ENCODE measurements at regions of chr7 and their contacts with region 1.

Region 1: DNA sequence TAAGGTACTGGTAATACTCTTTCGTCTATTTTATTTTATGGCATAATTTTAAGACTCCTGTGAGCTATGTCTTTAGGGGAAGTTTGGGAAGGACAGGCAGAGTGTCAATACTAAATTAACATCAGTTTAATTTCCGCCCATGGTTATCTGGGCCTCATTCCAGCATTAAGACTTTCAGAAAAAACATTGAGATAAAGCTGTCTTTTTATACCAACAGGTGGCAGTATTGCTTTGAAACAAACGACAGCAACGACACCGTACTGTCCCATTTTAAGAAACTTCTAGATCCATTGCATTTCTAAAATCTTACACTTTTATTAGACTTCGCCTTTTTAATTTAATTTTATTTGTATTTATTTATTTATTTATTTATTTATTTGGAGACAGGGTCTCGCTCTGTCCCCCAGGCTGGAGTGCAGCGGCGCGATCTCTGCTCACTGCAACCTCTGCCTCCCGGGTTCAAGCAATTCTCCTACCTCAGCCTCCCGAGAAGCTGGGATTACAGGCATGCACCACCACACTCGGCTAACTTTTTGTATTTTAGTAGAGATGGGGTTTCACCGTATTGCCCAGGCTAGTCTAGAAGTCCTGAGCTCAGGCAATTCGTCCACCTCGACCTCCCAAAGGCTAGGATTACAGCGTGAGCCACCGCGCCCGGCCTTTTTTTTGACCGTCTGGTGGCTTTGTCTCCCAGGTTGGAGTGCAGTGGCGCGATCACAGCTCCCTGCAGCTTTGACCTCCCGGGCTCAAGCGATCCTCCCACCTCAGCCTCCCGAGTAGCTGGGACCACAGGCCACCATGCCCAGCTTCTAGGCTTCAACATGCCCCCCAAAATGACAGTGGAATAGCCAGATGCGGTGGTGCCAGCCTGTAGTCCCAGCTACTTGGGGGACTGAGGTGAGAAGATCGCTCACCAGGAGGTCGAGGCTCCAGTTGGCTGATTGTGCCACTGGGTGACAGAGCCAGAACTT is 78.7 kb upstream of the C1GALT1 start:
- DNase-seq: peak in 2 of 3 donors; percentile 31 to 48
- ATAC-seq: peak; percentile 88
- H3K4me3 ChIP-seq: no peak overlapping the region
- H3K4me1 ChIP-seq: no peaks in the 10 kb centered on the region
- CTCF ChIP-seq: peak; percentile 45

Region 2: GRCh38 chr7:6691609-6692106 is 412.0 kb before region 1 on chr7:
- intact Hi-C with region 1: no loop called
- DNase-seq: no peak
- ATAC-seq: no peak
- H3K4me3 ChIP-seq: no peak overlapping the region
- H3K4me1 ChIP-seq: no peaks in the 10 kb centered on the region
- CTCF ChIP-seq: no peak

Region 3: GRCh38 chr7:7416031-7416858 is 312.6 kb after region 1 on chr7:
- intact Hi-C with region 1: loop called in 1 of 2 experiments (anchors 5 kb)
- DNase-seq: peak; percentile 56 to 71 (median 60)
- ATAC-seq: peak; percentile 86
- H3K4me3 ChIP-seq: no peak overlapping the region
- H3K4me1 ChIP-seq: peaks cover 27% of the 10 kb centered on the region
- CTCF ChIP-seq: no peak

Region 4: DNA sequence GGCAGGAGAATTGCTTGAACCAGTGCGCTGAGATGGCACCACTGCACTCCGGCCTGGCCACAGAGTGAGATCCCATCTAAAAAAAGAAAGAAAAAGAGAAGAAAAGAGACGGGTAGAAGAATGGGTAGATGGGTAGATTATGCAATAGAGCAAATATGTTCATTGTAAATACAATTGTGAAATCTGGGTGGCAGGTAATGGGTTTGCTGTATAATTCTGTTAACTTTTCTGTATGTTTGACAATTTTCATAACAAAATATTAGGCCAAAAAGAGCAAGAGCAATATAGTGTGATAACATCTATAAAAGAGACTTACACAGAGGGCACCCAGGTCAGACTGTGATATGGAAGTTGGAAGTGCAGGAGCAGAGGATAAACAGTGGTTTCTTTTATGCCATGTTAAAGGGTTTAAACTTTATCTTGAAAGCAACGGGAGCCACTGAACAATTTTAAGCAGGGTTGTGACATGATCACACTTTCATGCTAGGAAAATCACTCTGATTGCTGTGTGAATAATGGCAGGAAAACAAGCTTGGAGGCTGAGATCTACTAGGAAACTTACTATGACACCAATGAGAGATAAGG is 438.7 kb after region 1 on chr7:
- intact Hi-C with region 1: loop called in 1 of 2 experiments (anchors 10 kb)
- DNase-seq: no peak
- ATAC-seq: no peak
- H3K4me3 ChIP-seq: no peak overlapping the region
- H3K4me1 ChIP-seq: no peaks in the 10 kb centered on the region
- CTCF ChIP-seq: no peak

Region 5: DNA sequence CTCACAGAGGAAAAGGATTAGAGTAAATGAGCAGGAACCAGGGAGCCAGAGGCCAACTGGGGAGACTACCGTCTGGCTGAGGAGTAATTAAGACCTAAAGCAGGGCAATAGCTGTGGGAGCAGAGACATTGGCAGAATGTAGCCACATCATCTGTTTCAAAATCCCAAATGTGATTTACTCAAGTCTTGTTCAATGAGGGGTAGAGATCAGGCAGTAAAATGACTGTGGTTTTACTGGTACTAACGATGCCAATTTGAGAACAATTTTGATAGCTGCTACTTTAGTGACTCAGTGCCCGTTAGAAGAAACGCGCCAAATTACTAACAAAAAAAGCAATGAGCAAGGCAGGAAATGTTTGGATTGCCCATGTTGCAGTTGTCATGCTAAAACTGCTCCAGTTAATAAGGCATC is 450.4 kb after region 1 on chr7:
- intact Hi-C with region 1: loop called (anchors 10 kb)
- DNase-seq: no peak
- ATAC-seq: no peak
- H3K4me3 ChIP-seq: no peak overlapping the region
- H3K4me1 ChIP-seq: no peaks in the 10 kb centered on the region
- CTCF ChIP-seq: no peak